Activated naive CD4-positive, alpha-beta T cell treated with anti-CD3 and anti-CD28 coated beads, Interleukin-2, amount 10 ng/mL, durations not matched to agents 7 days and 5 days (primary cell): ENCODE measurements at regions of chr15 and their contacts with region 1.

Region 1: DNA sequence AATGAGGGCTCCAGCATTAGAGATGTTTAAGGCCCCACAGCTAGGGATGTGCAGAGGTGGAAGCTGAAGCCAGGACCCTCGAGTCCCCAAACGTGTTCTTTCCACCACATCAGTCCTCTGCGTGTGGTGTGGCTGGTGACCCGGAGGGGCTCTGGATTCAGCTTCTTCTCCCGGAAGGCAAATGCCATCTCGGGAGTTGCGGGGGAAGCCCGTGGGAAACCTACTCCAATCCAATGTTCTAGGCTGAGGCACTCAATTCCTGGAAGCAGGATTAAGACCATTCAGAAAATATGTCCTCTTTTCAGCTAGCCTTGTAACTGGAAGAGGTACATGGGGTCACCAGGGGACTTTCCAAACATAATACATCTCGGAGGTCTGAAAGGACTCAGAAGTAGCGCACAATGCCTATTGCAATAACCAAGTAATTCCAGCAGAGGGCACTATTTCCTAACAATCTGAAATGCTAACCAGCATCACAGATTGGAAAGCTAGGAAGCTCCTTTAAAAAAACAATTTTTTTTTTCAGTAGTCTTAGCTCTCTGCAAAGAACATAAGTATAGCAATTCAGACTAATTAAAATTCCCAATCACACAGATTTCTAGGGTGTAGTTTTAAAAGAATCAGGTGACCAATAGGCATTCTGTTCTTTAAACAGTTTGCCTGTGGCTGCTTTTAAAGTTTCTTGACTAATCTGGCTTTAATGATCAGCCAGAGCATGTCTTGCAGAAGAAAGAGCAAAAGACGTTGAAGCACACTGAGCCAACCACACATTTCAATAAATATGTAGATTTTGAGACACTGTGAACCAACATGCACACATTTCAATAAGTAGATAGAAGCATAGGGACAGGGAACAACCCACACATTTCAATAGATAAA is 36.1 kb downstream of the BNC1 start:
- DNase-seq: peak; percentile 40
- H3K4me3 Mint-ChIP-seq: no peak overlapping the region
- H3K27ac Mint-ChIP-seq: no peak overlapping the region
- H3K4me1 Mint-ChIP-seq: no peaks in the 10 kb centered on the region
- H3K27me3 Mint-ChIP-seq: peaks cover 27% of the 10 kb centered on the region

Region 2: DNA sequence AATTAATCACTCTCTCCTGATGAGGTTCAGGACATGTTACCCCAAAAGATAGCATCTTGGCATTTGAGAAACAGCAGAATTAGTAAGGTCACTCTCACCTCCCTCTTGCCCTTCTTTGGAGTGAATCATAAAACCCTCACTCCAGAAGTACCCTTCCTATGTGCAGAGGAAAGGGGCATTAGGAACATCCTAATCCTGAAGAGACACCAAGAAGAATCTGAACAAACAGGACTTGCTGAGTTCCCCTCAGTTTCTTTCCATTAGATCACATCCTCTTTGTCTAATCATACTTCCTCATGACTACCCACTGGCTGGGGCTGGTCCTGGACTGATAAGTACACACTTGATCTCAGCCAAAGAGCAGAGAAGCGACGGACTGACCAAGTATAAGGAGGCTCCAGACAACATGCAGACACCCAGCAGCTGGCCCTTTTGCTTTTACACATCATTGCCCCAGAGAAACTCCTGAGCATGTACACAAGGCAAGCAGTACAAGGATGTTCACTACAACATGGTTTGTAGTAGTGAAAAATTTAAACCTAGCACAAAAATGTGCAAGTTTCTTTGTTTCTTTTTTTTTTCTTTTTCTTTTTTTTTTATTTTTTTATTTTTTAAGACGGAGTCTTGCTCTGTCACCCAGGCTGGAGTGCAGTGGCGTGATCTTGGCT is 155.9 kb before region 1 on chr15:
- CTCF ChIA-PET with region 1: no interaction called
- DNase-seq: no peak
- H3K4me3 Mint-ChIP-seq: no peak overlapping the region
- H3K27ac Mint-ChIP-seq: no peak overlapping the region
- H3K4me1 Mint-ChIP-seq: peaks cover 6% of the 10 kb centered on the region
- H3K27me3 Mint-ChIP-seq: peaks cover 38% of the 10 kb centered on the region

Region 3: GRCh38 chr15:83144189-83144588 is 104.2 kb before region 1 on chr15:
- CTCF ChIA-PET with region 1: no interaction called
- DNase-seq: no peak
- H3K4me3 Mint-ChIP-seq: no peak overlapping the region
- H3K27ac Mint-ChIP-seq: no peak overlapping the region
- H3K4me1 Mint-ChIP-seq: no peaks in the 10 kb centered on the region
- H3K27me3 Mint-ChIP-seq: peaks cover 4% of the 10 kb centered on the region

Region 4: GRCh38 chr15:83262594-83263315 is 14.4 kb after region 1 on chr15:
- CTCF ChIA-PET with region 1: interaction called, 11 read pairs
- DNase-seq: no peak
- H3K4me3 Mint-ChIP-seq: no peak overlapping the region
- H3K27ac Mint-ChIP-seq: no peak overlapping the region
- H3K4me1 Mint-ChIP-seq: no peaks in the 10 kb centered on the region
- H3K27me3 Mint-ChIP-seq: peaks cover 36% of the 10 kb centered on the region

Region 5: GRCh38 chr15:83380682-83381081 is 132.3 kb after region 1 on chr15:
- CTCF ChIA-PET with region 1: interaction called, 19 read pairs
- DNase-seq: peak; percentile 62
- H3K4me3 Mint-ChIP-seq: no peak overlapping the region
- H3K27ac Mint-ChIP-seq: no peak overlapping the region
- H3K4me1 Mint-ChIP-seq: no peaks in the 10 kb centered on the region
- H3K27me3 Mint-ChIP-seq: peaks cover 41% of the 10 kb centered on the region

Region 6: DNA sequence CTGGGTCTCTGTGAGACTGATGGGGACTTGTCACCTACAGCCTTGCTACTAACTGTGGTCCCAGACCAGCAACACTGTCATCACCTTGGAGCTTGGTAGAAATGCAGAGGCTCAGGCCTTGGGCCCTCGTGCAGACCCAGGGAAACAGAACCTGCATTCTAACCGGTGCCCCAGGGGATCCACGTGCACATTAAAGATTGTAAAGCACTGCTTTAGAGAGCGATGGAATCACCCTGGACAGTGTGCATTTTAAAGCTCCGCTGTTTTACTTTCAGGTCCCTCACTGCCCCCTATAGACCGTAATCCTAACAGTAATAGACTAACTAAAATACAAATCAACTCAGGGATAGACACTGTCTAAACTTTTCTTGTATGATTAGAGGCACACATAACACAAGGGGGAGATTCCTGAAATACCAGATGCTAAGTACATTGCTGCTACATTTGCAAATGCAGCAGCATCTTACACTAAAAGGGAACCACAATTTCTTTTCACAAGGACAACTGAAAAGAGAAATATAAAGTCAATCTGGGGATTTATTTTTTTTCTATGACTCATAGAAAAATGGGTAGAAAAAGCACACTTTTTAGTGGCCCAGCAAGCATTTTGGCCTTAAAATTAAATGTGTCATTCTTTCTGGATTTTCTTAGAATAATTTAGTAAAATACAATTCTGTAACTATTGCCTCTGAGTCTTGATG is 188.2 kb after region 1 on chr15:
- CTCF ChIA-PET with region 1: interaction called, 25 read pairs
- DNase-seq: no peak
- H3K4me3 Mint-ChIP-seq: no peak overlapping the region
- H3K27ac Mint-ChIP-seq: no peak overlapping the region
- H3K4me1 Mint-ChIP-seq: no peaks in the 10 kb centered on the region
- H3K27me3 Mint-ChIP-seq: peaks cover 11% of the 10 kb centered on the region

Region 7: GRCh38 chr15:83538682-83539081 is 290.3 kb after region 1 on chr15:
- CTCF ChIA-PET with region 1: no interaction called
- DNase-seq: no peak
- H3K4me3 Mint-ChIP-seq: no peak overlapping the region
- H3K27ac Mint-ChIP-seq: no peak overlapping the region
- H3K4me1 Mint-ChIP-seq: no peaks in the 10 kb centered on the region
- H3K27me3 Mint-ChIP-seq: no peaks in the 10 kb centered on the region

Region 8: DNA sequence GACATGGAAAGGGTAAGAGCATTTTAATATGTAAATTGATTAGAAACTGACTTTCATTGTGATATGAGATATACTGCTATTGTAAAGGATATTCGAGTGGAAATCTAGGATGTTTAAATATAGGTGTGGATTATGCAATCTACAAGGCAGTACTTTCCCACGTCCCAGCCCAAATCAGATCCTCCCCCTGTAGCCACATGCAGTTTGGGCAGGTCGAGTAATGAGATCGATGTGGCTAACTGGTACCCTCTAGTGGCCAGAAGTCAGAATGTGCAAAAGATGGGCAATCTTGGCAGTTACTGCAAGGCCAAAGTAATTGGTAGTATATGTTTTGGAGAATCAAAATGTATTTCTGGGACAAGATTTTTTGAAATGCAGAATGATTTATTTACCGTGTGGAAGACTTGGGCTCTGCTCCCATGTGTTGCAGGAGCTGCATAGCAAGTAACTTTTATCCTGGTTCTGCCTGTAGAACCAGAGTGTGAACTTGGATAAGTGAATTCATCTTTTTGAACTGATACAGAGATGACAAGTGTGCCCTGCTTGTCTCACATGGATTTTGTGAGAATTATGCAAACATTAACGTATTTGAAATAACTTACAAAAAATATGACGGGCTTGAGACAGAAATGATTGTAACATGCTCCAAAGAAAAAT is 311.0 kb after region 1 on chr15:
- CTCF ChIA-PET with region 1: interaction called, 17 read pairs
- DNase-seq: peak; percentile 67
- H3K4me3 Mint-ChIP-seq: no peak overlapping the region
- H3K27ac Mint-ChIP-seq: no peak overlapping the region
- H3K4me1 Mint-ChIP-seq: no peaks in the 10 kb centered on the region
- H3K27me3 Mint-ChIP-seq: no peaks in the 10 kb centered on the region

Region 9: GRCh38 chr15:83564975-83565532 is 316.7 kb after region 1 on chr15:
- CTCF ChIA-PET with region 1: interaction called, 17 read pairs
- DNase-seq: no peak
- H3K4me3 Mint-ChIP-seq: no peak overlapping the region
- H3K27ac Mint-ChIP-seq: no peak overlapping the region
- H3K4me1 Mint-ChIP-seq: no peaks in the 10 kb centered on the region
- H3K27me3 Mint-ChIP-seq: no peaks in the 10 kb centered on the region